ENCODE measurements at regions of chr9 and their contacts with region 1.

Region 1: DNA sequence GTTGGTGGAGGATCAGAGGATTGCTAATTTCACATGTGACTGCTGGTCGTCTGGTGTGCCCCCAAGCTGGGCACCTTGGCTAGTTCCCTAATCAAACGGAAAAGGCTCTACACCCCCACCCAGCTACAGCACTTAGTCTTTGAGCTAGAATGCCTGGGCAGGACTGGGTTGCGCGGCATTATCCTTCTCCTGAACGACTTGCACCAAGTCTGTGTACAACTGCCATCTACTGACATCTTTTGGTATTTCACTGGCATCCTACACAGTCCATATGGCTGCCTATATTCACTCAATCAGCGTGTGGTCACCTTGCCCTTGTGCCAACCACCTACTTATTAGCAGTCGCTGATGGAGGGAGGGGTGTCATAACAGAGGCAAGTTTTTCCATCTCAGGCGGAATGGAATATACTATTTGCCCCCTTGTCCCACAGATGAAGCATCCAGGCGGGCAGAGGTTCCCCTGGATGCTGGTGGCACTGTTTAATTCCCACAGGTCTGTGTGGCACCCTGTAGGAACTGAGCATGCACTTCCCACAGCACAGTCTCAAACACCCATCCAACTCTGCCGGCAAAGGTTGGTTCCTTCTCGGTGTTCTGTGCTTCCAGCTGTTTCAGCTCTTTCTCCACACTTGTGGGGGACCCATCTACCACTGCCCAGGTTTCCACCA is 150.1 kb downstream of the OSTF1 start:
- DNase-seq: peak; percentile 48
- H3K4me3 ChIP-seq: no peak overlapping the region
- H3K27ac ChIP-seq: no peak overlapping the region
- H3K4me1 ChIP-seq: no peaks in the 10 kb centered on the region
- H3K27me3 ChIP-seq: no peaks in the 10 kb centered on the region
- CTCF ChIP-seq: peak; percentile 54 to 90 (median 75)
- EP300 ChIP-seq: no peak
- POLR2A ChIP-seq: no peak

Region 2: DNA sequence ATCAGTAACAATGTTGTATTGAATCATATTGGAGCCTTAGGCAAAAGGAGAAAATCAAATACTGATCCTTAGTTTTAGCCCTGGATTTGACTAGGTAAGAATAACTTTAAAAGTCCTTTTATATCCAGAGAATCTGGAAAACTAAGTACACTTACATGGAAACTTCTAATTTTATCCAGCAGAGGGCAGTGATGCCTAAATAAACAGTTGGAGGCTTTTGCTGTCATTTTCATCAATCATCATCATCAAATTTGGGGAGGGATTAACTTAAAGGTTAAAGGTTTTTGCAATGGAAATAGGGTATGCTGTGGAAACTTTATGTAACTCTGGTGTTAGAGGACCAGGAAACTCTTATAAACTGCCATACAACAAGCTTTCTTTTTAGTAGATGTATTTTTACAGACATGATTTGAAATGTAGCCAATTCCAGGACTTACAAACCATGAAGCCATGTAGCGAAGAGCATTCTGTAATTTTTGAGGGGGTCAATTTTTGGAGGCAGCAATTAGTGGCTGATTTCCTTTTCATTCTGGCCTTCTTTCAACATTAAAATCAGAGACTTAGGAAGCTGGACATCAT is 37.5 kb before region 1 on chr9:
- in situ Hi-C with region 1: loop called in 1 of 4 experiments (anchors 5 kb)
- intact Hi-C with region 1: no loop called
- DNase-seq: no peak
- H3K4me3 ChIP-seq: no peak overlapping the region
- H3K27ac ChIP-seq: no peak overlapping the region
- H3K4me1 ChIP-seq: no peaks in the 10 kb centered on the region
- H3K27me3 ChIP-seq: no peaks in the 10 kb centered on the region
- CTCF ChIP-seq: peak; percentile 49 to 77 (median 69)
- EP300 ChIP-seq: no peak
- POLR2A ChIP-seq: no peak

Region 3: DNA sequence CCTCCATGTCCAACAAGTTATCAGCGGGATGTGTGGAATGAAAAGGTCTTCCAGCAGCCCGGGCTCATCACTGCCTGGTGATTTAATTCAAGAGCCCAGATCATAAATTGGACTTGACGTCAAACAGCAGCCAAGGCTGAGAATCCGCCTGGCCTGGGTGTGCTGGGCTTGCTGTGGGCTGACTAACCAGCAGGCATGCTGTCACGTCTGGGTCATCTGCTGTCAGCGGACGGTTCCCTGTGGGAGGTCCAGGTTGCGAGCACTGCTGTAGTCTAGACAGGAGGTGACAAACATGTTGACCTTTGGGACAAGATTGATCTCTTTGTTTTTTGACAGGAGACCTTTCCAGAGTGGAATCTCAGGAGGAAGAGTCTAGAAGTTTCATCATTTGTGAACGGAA is 139.6 kb after region 1 on chr9:
- in situ Hi-C with region 1: no loop called
- intact Hi-C with region 1: no loop called
- DNase-seq: no peak
- H3K4me3 ChIP-seq: no peak overlapping the region
- H3K27ac ChIP-seq: no peak overlapping the region
- H3K4me1 ChIP-seq: no peaks in the 10 kb centered on the region
- H3K27me3 ChIP-seq: no peaks in the 10 kb centered on the region
- CTCF ChIP-seq: no peak
- EP300 ChIP-seq: no peak
- POLR2A ChIP-seq: no peak

Measured in transverse colon (tissue), 4 donors.